Endothelial cell of umbilical vein (primary cell): ENCODE measurements at regions of chr9 and their contacts with region 1.

Region 1: GRCh38 chr9:16530669-16531642 is 339.5 kb downstream of the BNC2 start:
- DNase-seq: no peak
- H3K4me3 ChIP-seq: no peak overlapping the region
- H3K27ac ChIP-seq: no peak overlapping the region
- H3K4me1 ChIP-seq: peaks cover 34% of the 10 kb centered on the region
- H3K27me3 ChIP-seq: no peaks in the 10 kb centered on the region
- CTCF ChIP-seq: no peak
- POLR2A ChIP-seq: no peak

Region 2: DNA sequence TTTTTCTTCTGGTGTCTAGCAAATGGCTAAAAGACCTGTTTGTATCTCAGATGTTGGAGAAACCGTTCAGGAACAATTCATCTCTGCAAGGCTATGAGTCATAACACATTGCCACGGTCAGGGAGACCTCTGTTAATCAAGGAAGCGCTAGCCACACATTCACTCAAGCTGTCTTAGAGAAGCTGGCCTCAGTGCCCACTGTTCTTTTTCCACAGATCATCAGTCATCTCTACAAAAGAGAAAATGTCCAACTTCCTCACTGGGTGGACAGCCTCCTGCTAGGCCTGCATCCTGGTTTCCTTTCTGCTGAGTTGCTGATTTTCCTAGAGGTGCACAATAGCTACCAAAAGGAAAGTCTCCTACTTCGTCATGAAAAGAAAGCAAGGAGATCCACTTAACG is 21.0 kb before region 1 on chr9:
- CTCF ChIA-PET with region 1: no interaction called
- POLR2A ChIA-PET with region 1: no interaction called
- dilution Hi-C with region 1: no loop called
- intact Hi-C with region 1: loop called (anchors 2 kb)
- DNase-seq: peak; percentile 86
- H3K4me3 ChIP-seq: peak overlapping the region in 2 of 3 experiments; percentile 12 to 57
- H3K27ac ChIP-seq: peak overlapping the region; percentile 85
- H3K4me1 ChIP-seq: peaks cover 33% of the 10 kb centered on the region
- H3K27me3 ChIP-seq: no peaks in the 10 kb centered on the region
- CTCF ChIP-seq: no peak
- POLR2A ChIP-seq: no peak

Region 3: DNA sequence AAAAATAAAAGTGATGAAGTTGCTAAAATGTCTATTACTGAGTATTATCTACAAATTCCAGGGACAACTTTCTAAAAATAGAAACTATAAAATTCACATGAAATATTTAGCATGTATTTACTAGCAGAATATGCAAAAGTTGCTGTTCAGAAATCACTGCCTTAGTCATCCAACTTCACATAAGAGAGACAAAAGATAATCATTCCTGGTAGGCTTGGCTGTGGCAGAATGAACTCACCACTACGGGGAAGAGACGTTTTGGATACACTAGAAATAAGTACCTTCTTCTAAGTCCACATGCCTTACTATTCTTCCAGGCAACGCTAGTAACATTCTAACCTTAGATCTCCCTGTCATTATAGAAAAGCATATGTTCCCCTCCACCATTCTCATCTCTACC is 67.4 kb after region 1 on chr9:
- CTCF ChIA-PET with region 1: no interaction called
- POLR2A ChIA-PET with region 1: no interaction called
- dilution Hi-C with region 1: no loop called
- intact Hi-C with region 1: no loop called
- DNase-seq: no peak
- H3K4me3 ChIP-seq: no peak overlapping the region
- H3K27ac ChIP-seq: no peak overlapping the region
- H3K4me1 ChIP-seq: peaks cover 7% of the 10 kb centered on the region
- H3K27me3 ChIP-seq: no peaks in the 10 kb centered on the region
- CTCF ChIP-seq: no peak
- POLR2A ChIP-seq: no peak

Region 4: GRCh38 chr9:17453751-17454150 is 922.8 kb after region 1 on chr9:
- CTCF ChIA-PET with region 1: no interaction called
- POLR2A ChIA-PET with region 1: no interaction called
- dilution Hi-C with region 1: no loop called
- intact Hi-C with region 1: no loop called
- DNase-seq: no peak
- H3K4me3 ChIP-seq: no peak overlapping the region
- H3K27ac ChIP-seq: no peak overlapping the region
- H3K4me1 ChIP-seq: peaks cover 2% of the 10 kb centered on the region
- H3K27me3 ChIP-seq: no peaks in the 10 kb centered on the region
- CTCF ChIP-seq: no peak
- POLR2A ChIP-seq: no peak